ENCODE measurements at regions of chr4 and their contacts with region 1.

Region 1: GRCh38 chr4:76061982-76062381 is 12.5 kb upstream of the ART3 start:
- DNase-seq: no peak
- ATAC-seq: peak; percentile 96
- H3K4me3 Mint-ChIP-seq: peak overlapping the region; percentile 49
- H3K27ac Mint-ChIP-seq: peak overlapping the region; percentile 75
- H3K4me1 Mint-ChIP-seq: peaks cover 42% of the 10 kb centered on the region
- H3K27me3 Mint-ChIP-seq: no peaks in the 10 kb centered on the region
- CTCF ChIP-seq: no peak

Region 2: GRCh38 chr4:75989846-75990528 is 72.0 kb before region 1 on chr4:
- CTCF ChIA-PET with region 1: interaction called, 117 read pairs
- POLR2A ChIA-PET with region 1: interaction called, 23 read pairs
- intact Hi-C with region 1: loop called (anchors 1 kb)
- DNase-seq: no peak
- ATAC-seq: no peak
- H3K4me3 Mint-ChIP-seq: peak overlapping the region; percentile 95
- H3K27ac Mint-ChIP-seq: peak overlapping the region; percentile 86
- H3K4me1 Mint-ChIP-seq: peaks cover 34% of the 10 kb centered on the region
- H3K27me3 Mint-ChIP-seq: peaks cover 2% of the 10 kb centered on the region
- CTCF ChIP-seq: no peak

Region 3: DNA sequence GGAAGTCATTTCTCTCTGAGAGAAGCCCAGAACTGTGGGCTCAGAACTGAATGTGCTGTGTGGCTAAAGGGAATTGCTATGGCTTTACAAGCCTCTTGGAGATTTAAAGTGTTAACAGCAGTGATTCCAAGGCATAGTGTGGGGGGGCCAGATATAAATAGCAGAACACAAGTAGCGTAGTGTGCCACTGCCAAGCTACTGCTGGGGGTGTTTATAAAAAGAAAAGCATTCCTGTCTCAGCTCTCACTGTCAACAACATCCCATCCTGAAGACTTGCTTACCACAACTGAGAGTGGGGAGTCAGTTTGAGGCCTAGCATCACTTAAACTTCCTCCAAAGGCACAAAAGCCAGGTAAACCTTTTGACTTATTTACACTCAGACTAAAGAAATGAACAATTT is 12.5 kb after region 1 on chr4 and contains the start of gene ART3:
- CTCF ChIA-PET with region 1: no interaction called
- POLR2A ChIA-PET with region 1: no interaction called
- intact Hi-C with region 1: no loop called
- DNase-seq: no peak
- ATAC-seq: no peak
- H3K4me3 Mint-ChIP-seq: no peak within 1 kb of the TSS
- H3K27ac Mint-ChIP-seq: no peak within 1 kb of the TSS
- H3K4me1 Mint-ChIP-seq: no peaks in the 10 kb centered on the region
- H3K27me3 Mint-ChIP-seq: peaks cover 6% of the 10 kb centered on the region
- CTCF ChIP-seq: no peak
- total RNA-seq, gene ART3: not detected in 2 replicates

Measured in activated B cell treated with CpG ODN at 0.5 μM for 24 hours (primary cell).